ENCODE measurements at regions of chr7 and their contacts with region 1.

Region 1: GRCh38 chr7:7182156-7183060 is at the start of gene C1GALT1:
- DNase-seq: peak; percentile 98
- H3K4me3 ChIP-seq: peak within 1 kb of the TSS; percentile 85
- H3K27ac ChIP-seq: peak within 1 kb of the TSS; percentile 85
- H3K4me1 ChIP-seq: no peaks in the 10 kb centered on the region
- H3K27me3 ChIP-seq: no peaks in the 10 kb centered on the region
- CTCF ChIP-seq: peak; percentile 50
- total RNA-seq, gene C1GALT1: 14.9 and 15.6 TPM in 2 replicates

Region 2: GRCh38 chr7:7228967-7229366 is 46.6 kb after region 1 on chr7:
- CTCF ChIA-PET with region 1: no interaction called
- POLR2A ChIA-PET with region 1: interaction called, 10 read pairs
- intact Hi-C with region 1: no loop called
- DNase-seq: no peak
- H3K4me3 ChIP-seq: no peak overlapping the region
- H3K27ac ChIP-seq: no peak overlapping the region
- H3K4me1 ChIP-seq: no peaks in the 10 kb centered on the region
- H3K27me3 ChIP-seq: no peaks in the 10 kb centered on the region
- CTCF ChIP-seq: no peak

Measured in A673 (cell line).